H1 (cell line): ENCODE measurements at regions of chr1 and their contacts with region 1.

Region 1: GRCh38 chr1:211335522-211336157 is 9.0 kb downstream of the TRAF5 start:
- DNase-seq: no peak
- H3K4me3 ChIP-seq: no peak overlapping the region
- H3K27ac ChIP-seq: no peak overlapping the region
- H3K4me1 ChIP-seq: peaks cover 4 to 10% (median 7%) of the 10 kb centered on the region in 4 experiments
- H3K27me3 ChIP-seq: no peaks in the 10 kb centered on the region
- CTCF ChIP-seq: no peak
- EP300 ChIP-seq: no peak
- POLR2A ChIP-seq: no peak
- RAD21 ChIP-seq: no peak

Region 2: GRCh38 chr1:211247921-211248320 is 87.7 kb before region 1 on chr1:
- CTCF ChIA-PET with region 1: no interaction called
- POLR2A ChIA-PET with region 1: no interaction called
- DNase-seq: peak in 1 of 2 experiments; percentile 29
- H3K4me3 ChIP-seq: no peak overlapping the region
- H3K27ac ChIP-seq: peak overlapping the region; percentile 40; the same call in 1 of the 2 replicates
- H3K4me1 ChIP-seq: peaks cover 0 to 9% (median 5%) of the 10 kb centered on the region in 4 experiments; a peak in 5 of 7 replicates
- H3K27me3 ChIP-seq: no peaks in the 10 kb centered on the region
- CTCF ChIP-seq: no peak
- EP300 ChIP-seq: no peak
- POLR2A ChIP-seq: no peak
- RAD21 ChIP-seq: no peak

Region 3: DNA sequence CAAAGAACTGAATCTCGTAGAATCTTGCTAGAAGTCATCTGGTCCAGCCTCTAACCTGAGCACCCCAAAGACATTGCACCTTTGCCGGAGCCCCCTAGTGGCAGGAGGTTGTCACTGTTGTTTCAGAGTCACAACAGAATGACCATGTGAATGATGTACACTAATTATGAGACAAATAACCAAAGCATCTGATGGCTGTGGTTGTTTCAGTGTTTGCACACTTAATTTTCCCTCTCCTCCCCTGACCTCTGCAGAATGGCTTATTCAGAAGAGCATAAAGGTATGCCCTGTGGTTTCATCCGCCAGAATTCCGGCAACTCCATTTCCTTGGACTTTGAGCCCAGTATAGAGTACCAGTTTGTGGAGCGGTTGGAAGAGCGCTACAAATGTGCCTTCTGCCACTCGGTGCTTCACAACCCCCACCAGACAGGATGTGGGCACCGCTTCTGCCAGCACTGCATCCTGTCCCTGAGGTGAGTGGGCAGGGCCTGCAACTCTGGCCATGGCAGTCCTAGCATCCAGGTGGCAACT is 17.4 kb after region 1 on chr1:
- CTCF ChIA-PET with region 1: interaction called, 14 read pairs
- POLR2A ChIA-PET with region 1: interaction called, 4 read pairs
- DNase-seq: peak in 1 of 2 experiments; percentile 79
- H3K4me3 ChIP-seq: no peak overlapping the region
- H3K27ac ChIP-seq: no peak overlapping the region
- H3K4me1 ChIP-seq: no peaks in the 10 kb centered on the region
- H3K27me3 ChIP-seq: no peaks in the 10 kb centered on the region
- CTCF ChIP-seq: peak; percentile 70 to 90 (median 72)
- EP300 ChIP-seq: no peak
- POLR2A ChIP-seq: no peak
- RAD21 ChIP-seq: peak; percentile 59 to 68

Region 4: DNA sequence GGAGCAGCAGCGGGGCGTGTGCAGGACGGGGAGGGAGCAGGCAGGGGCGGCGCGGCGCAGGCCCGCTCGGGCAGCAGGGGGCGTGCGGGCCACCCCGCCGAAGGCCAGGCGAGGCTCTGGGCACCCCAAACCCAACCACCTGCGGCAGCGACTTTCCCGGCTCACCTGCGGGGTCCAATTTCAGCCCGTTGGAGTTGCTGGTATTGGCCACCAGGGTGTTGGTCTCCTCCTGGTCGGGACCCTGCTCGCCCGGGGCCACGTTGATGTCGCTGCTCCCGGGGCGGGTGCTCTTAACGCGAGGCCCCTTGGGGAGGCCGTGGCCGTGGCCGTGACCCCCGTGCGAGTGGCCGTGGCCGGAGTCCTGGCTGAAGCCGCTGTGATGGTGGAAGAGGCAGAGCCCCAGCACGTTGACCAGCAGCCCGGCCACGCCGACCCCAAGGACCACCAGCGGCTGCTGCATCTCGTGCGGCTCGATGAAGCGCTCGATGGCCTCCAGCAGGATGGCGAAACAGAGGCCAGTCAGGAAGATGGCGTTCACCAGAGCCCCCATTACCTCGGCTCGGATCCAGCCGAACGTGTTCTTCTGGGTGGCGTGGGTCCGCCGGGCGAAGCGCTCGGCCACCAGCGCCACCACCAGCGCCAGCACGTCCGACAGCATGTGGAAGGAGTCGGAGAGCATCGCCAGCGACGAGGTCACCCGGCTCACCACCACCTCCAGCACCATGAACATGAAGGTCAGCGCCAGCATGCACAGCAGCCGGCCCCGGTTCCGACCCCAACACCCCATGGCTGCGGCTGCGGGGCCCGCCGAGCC is 242.4 kb after region 1 on chr1:
- CTCF ChIA-PET with region 1: no interaction called
- POLR2A ChIA-PET with region 1: no interaction called
- DNase-seq: peak; percentile 53 to 85
- H3K4me3 ChIP-seq: peak overlapping the region; percentile 66 to 92 (median 84)
- H3K27ac ChIP-seq: no peak overlapping the region
- H3K4me1 ChIP-seq: peaks cover 0 to 13% (median 9%) of the 10 kb centered on the region in 4 experiments; a peak in 6 of 7 replicates
- H3K27me3 ChIP-seq: no peaks in the 10 kb centered on the region
- CTCF ChIP-seq: peak; percentile 74 to 84 (median 80)
- EP300 ChIP-seq: peak in 1 of 2 experiments; percentile 9; a peak in 1 of 3 replicates
- POLR2A ChIP-seq: peak in 1 of 2 experiments; percentile 57; a peak in 2 of 3 replicates
- RAD21 ChIP-seq: peak; percentile 57 to 71